ENCODE measurements at regions of chr5 and their contacts with region 1.

Region 1: GRCh38 chr5:149960272-149961185 is at the start of gene SLC26A2:
- DNase-seq: peak; percentile 98 to 99
- ATAC-seq: peak; percentile 97 to 99
- H3K4me3 ChIP-seq: peak within 1 kb of the TSS; percentile 83 to 97 (median 93)
- H3K27ac ChIP-seq: peak within 1 kb of the TSS; percentile 89 to 93 (median 90)
- H3K4me1 ChIP-seq: peaks cover 8 to 15% of the 10 kb centered on the region in 2 donors
- H3K27me3 ChIP-seq: no peaks in the 10 kb centered on the region
- CTCF ChIP-seq: peak in 1 of 5 experiments; percentile 14
- POLR2A ChIP-seq: peak; percentile 93 to 97
- total RNA-seq, gene SLC26A2: 3.0 to 9.9 (median 6.9) TPM

Region 2: GRCh38 chr5:149932445-149933350 is 27.8 kb before region 1 on chr5:
- in situ Hi-C with region 1: no loop called
- intact Hi-C with region 1: loop called (anchors 1 kb)
- DNase-seq: peak in 1 of 2 donors; percentile 57
- ATAC-seq: peak; percentile 77 to 86
- H3K4me3 ChIP-seq: peak overlapping the region; percentile 56 to 75 (median 60)
- H3K27ac ChIP-seq: peak overlapping the region; percentile 53 to 85 (median 70)
- H3K4me1 ChIP-seq: peaks cover 0 to 11% of the 10 kb centered on the region in 2 donors
- H3K27me3 ChIP-seq: no peaks in the 10 kb centered on the region
- CTCF ChIP-seq: peak; percentile 48 to 74 (median 61)
- POLR2A ChIP-seq: peak in 1 of 2 donors; percentile 14

Measured in gastrocnemius medialis (tissue), 4 donors.